ENCODE measurements at regions of chr16 and their contacts with region 1.

Region 1: GRCh38 chr16:3530371-3530914 is 29.6 kb downstream of the CLUAP1 start:
- DNase-seq: no peak
- H3K4me3 Mint-ChIP-seq: no peak overlapping the region
- H3K27ac Mint-ChIP-seq: no peak overlapping the region
- H3K4me1 Mint-ChIP-seq: peaks cover 5% of the 10 kb centered on the region
- H3K27me3 Mint-ChIP-seq: no peaks in the 10 kb centered on the region

Region 2: DNA sequence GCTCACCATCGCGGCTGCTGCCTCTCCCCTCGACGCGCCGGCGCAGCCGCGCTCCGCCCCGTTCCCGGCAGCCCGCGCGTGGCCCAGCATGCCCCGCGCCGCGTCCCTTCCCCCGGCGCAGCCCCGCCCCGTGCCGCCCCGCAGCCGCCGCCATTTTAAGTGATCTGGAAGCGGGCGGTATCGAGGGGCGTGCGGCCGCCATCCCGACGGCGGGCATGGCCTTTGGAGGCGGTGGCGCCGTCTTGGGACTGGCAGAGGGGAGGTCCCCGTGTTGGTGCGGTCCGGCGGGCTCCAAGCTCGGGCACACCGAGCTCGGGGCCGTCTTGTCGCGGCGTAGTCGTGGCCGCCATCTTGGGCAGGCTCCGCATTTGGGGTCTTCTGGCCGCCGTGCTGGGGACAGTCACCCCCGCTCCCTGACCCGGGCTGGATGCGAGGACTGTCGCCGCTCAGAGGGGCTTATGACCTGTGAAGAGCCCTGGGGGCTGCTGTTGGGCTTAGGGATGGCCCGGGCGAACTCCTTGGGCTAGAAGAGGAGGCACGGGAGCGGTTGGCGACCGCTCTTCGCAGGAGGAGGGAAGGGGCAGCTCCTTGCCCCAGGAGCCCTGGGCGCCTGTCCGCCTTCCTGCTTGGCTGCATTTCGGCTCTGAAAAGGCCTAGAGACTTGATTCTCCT is 753.1 kb before region 1 on chr16 and contains the start of gene ELOB:
- CTCF ChIA-PET with region 1: no interaction called
- POLR2A ChIA-PET with region 1: no interaction called
- intact Hi-C with region 1: no loop called
- DNase-seq: peak; percentile 93
- H3K4me3 Mint-ChIP-seq: peak within 1 kb of the TSS; percentile 96
- H3K27ac Mint-ChIP-seq: peak within 1 kb of the TSS; percentile 98
- H3K4me1 Mint-ChIP-seq: peaks cover 31% of the 10 kb centered on the region
- H3K27me3 Mint-ChIP-seq: no peaks in the 10 kb centered on the region
- total RNA-seq, gene ELOB: 165 to 175 TPM

Region 3: DNA sequence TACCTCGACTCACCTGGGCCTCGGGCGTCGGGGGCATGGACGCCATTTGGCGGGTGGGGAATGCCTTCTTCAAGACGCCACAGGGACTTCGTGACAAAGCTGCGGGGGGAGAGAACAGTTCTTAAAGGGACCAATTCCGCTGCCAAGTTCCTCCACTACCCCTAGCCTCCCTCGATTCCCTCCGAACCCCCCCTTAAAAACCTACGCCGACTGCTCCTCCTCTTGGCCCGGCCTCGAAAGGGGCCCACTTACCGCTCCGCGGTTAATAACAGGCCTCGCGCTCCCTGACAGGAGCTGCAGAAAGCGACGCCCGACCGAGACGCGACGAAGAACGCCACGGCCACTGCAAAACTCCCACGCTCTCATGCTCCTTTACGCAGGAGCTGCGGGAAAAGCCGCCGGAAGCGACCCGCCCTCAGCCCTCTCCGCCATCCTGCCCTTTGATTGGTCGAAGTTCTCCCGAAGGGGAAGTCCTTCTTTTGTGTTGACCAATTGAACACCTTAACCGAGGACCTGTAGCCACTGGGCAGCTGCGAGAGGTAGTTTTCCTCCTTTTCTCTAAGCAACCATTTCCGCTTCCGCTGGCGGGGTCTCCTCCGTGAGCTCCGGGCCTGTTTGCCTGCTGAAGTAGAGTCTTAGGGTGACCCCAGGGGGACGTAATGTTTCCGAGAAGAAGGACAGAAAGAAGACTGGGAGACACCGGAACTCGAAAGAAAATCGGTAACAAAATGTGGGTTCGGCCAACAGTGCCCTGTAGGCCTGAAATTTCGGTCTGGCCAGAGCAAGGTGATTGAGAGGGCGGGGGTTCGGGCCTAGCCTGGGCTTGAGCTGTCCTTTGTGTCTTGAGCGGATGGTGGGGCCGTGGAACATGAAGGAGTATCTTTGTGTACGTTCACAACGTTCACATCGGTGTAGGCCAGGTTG is 87.1 kb before region 1 on chr16 and contains the starts of genes NAA60 and ZNF597:
- CTCF ChIA-PET with region 1: no interaction called
- POLR2A ChIA-PET with region 1: no interaction called
- intact Hi-C with region 1: no loop called
- DNase-seq: peak; percentile 89
- H3K4me3 Mint-ChIP-seq: peak within 1 kb of the TSS; percentile 97
- H3K27ac Mint-ChIP-seq: peak within 1 kb of the TSS; percentile 95
- H3K4me1 Mint-ChIP-seq: peaks cover 15% of the 10 kb centered on the region
- H3K27me3 Mint-ChIP-seq: no peaks in the 10 kb centered on the region
- total RNA-seq, gene NAA60: 26.9 to 34.1 TPM
- total RNA-seq, gene ZNF597: 1.6 to 2.1 TPM

Region 4: GRCh38 chr16:3665508-3665907 is 135.1 kb after region 1 on chr16:
- CTCF ChIA-PET with region 1: no interaction called
- POLR2A ChIA-PET with region 1: no interaction called
- intact Hi-C with region 1: loop called (anchors 1 kb)
- DNase-seq: peak; percentile 22
- H3K4me3 Mint-ChIP-seq: no peak overlapping the region
- H3K27ac Mint-ChIP-seq: no peak overlapping the region
- H3K4me1 Mint-ChIP-seq: peaks cover 16% of the 10 kb centered on the region
- H3K27me3 Mint-ChIP-seq: no peaks in the 10 kb centered on the region

Measured in activated CD4-positive, alpha-beta memory T cell treated with anti-CD3 and anti-CD28 coated beads for 36 hours (primary cell).